PC-3 (cell line): ENCODE measurements at regions of chr11 and their contacts with region 1.

Region 1: DNA sequence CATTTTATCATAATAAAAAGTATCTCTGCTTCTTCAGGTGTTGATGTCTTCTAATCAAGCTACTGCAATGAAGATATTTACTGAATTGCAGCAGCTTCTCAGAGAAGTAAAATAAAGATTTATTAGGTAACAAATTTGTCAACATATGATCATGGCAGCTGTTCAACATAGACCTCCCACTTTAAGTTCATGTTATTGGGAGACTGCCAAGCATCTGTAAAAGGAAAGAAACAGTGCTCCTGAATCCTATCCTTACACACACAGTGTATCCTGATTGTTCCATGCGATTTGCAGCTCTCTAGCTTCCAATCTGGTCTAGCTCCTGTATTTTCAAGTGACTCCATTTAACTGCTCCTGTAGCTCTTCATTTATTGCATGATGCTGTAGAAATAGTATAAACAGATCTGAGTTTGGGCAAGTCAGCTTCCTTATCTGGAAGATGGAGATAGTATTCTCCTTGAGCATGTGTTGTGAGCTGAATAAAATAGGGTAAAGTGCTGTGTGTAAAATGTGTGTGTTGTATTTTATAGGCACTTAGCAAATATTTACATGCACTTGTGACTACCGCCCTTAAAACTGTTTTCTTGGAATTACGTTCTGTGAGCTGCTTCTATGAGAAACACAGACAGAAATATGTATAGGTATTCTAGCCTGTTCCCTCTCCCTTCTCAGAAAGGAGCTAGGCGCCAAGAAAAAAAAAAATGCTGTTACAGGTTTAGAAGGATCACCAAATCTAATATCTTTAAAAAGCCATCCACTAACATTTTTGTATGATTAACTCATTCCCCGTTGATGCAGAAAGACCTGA is 290.6 kb downstream of the JRKL start:
- DNase-seq: peak; percentile 49
- ATAC-seq: peak; percentile 92
- H3K4me3 ChIP-seq: no peak overlapping the region
- H3K27ac ChIP-seq: no peak overlapping the region
- H3K4me1 ChIP-seq: peaks cover 11% of the 10 kb centered on the region
- H3K27me3 ChIP-seq: peaks cover 11% of the 10 kb centered on the region
- CTCF ChIP-seq: no peak

Region 2: GRCh38 chr11:96753997-96754396 is 73.6 kb after region 1 on chr11:
- CTCF ChIA-PET with region 1: no interaction called
- POLR2A ChIA-PET with region 1: no interaction called
- intact Hi-C with region 1: loop called (anchors 1 kb)
- DNase-seq: peak; percentile 59
- ATAC-seq: peak; percentile 83
- H3K4me3 ChIP-seq: no peak overlapping the region
- H3K27ac ChIP-seq: no peak overlapping the region
- H3K4me1 ChIP-seq: peaks cover 12% of the 10 kb centered on the region
- H3K27me3 ChIP-seq: no peaks in the 10 kb centered on the region; the same call in 1 of the 2 replicates
- CTCF ChIP-seq: no peak